Activated CD4-positive, alpha-beta memory T cell treated with anti-CD3 and anti-CD28 coated beads for 36 hours (primary cell): ENCODE measurements at regions of chr9 and their contacts with region 1.

Region 1: DNA sequence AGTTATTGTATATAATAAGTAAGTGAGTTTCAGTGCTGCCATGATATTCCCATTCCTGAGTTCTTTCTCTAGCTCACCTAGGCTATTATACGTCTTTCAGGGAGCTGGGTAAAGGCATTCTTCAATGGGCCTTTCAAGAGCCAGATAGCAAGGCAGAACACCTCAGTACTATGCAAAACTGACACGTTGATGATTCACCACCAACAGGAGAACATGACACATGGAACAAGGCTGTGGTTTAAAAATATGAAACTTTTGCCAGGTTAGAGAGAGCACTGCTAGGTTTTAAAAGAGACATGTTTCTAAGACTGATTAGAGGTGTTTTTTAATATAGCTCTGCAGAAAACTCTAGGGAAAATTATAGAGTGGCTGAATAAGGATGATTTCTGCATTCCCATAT is 95.9 kb downstream of the UGCG start:
- DNase-seq: peak; percentile 45
- H3K4me3 Mint-ChIP-seq: no peak overlapping the region
- H3K27ac Mint-ChIP-seq: peak overlapping the region; percentile 18
- H3K4me1 Mint-ChIP-seq: peaks cover 34% of the 10 kb centered on the region
- H3K27me3 Mint-ChIP-seq: peaks cover 2% of the 10 kb centered on the region

Region 2: DNA sequence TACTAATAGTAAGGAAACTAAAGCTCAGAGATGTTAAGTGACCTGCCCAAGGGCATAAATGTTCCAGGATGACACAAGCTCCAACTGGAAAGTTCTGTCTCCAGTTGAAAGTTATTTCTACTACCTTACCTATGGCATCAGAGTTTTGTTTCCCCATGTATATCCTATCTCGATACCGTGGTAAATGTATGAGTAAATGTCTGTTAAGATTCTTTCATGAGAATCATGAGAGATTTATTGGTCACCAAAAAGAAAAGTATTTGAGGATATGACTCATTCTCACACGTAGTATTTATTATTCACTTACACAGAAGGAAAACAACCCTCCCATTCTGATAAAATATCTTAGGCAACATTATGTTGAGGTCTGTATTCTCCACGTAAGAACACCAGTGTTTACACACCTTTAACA is 186.7 kb before region 1 on chr9:
- CTCF ChIA-PET with region 1: interaction called, 3 read pairs
- POLR2A ChIA-PET with region 1: no interaction called
- intact Hi-C with region 1: loop called (anchors 1 kb)
- DNase-seq: no peak
- H3K4me3 Mint-ChIP-seq: no peak overlapping the region
- H3K27ac Mint-ChIP-seq: no peak overlapping the region
- H3K4me1 Mint-ChIP-seq: peaks cover 30% of the 10 kb centered on the region
- H3K27me3 Mint-ChIP-seq: no peaks in the 10 kb centered on the region

Region 3: GRCh38 chr9:111937781-111938426 is 54.6 kb before region 1 on chr9:
- CTCF ChIA-PET with region 1: no interaction called
- POLR2A ChIA-PET with region 1: interaction called, 6 read pairs
- intact Hi-C with region 1: loop called (anchors 1 kb)
- DNase-seq: peak; percentile 88
- H3K4me3 Mint-ChIP-seq: peak overlapping the region; percentile 53
- H3K27ac Mint-ChIP-seq: peak overlapping the region; percentile 83
- H3K4me1 Mint-ChIP-seq: peaks cover 23% of the 10 kb centered on the region
- H3K27me3 Mint-ChIP-seq: no peaks in the 10 kb centered on the region

Region 4: DNA sequence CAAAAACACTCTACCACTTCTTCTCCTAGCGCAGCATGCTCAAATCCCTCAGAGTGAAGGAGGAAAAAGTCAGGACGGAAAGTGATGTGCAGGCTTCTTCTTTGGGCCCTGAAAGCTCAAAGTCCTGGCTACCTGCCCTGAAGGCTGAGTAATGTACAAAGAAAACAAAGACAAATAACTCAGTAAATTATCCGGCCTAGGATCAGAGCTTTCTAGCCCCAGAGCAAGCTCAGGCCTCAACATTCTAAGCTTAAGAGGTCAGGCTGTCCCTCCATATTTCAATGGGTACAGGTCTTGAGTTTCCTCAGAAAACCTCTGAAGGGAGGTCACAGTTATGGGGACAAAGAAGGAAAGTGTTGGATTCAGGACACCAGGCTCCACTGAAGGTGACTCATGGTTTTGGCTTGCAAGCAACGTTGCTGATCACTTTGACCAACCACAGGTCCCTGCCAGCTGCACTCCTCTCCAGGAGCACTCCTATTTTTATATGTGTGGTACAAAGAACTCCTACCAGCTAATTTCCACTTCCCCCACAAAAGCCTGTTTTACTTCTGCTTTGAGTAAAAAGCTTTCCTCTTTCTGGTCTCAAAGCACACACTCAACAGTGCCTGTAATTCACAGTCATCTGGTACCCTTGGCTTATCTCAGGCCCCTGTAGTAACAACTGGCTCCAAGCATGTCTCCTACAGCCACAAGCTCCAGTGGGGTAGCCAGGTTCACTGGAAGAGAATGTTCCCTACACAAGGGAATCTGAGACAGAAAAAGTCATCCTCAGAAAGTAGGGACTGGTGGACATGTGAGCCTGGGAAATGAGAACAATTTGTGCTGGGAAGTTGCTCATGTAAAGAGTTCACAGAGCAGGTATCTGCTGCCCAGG is 19.7 kb after region 1 on chr9:
- CTCF ChIA-PET with region 1: interaction called, 10 read pairs
- POLR2A ChIA-PET with region 1: interaction called, 10 read pairs
- intact Hi-C with region 1: loop called (anchors 1 kb)
- DNase-seq: peak; percentile 49
- H3K4me3 Mint-ChIP-seq: no peak overlapping the region
- H3K27ac Mint-ChIP-seq: no peak overlapping the region
- H3K4me1 Mint-ChIP-seq: peaks cover 31% of the 10 kb centered on the region
- H3K27me3 Mint-ChIP-seq: peaks cover 25% of the 10 kb centered on the region

Region 5: DNA sequence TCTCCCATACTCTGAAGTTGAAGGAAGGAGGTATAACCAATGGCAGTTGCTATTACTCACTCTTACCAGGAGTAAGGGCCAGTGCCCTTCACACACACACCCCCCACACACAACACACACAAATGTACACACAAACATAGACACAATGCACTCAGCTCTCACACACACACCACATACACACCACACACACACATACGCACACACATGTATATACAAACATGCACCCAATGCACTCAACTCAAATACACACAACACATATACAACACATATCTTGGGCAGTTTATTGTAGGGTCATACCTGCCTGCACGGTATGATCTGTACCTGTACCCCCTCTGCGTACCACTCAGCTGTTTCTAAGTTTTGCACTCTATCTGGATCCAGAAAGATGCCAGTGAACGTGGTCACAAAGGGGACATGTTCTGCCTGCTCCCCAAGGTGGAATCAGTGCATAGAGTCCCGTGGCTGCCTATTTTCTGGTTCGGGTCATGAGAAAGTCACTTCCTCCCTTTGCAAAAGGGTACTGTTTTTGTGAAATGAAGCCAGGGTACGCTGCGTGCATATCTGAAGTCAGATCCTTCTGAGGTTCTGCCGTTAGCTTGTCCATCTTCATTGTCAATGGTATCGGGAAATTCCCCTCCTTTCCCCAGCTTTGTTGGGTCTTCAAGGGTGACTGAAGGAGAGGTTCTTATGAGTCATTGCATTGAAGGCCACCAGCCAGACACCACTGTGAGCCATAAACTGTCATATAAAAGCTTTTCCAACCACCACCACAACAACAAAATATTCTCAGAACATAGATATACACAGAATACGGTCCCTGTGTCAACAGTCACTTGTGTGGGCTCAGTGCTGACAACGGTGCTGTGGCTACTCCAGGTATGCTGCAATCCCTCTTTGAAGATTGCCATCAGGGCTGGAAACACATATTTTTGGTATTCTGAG is 36.0 kb after region 1 on chr9:
- CTCF ChIA-PET with region 1: interaction called, 3 read pairs
- POLR2A ChIA-PET with region 1: interaction called, 3 read pairs
- intact Hi-C with region 1: loop called (anchors 1 kb)
- DNase-seq: peak; percentile 59
- H3K4me3 Mint-ChIP-seq: no peak overlapping the region
- H3K27ac Mint-ChIP-seq: no peak overlapping the region
- H3K4me1 Mint-ChIP-seq: peaks cover 43% of the 10 kb centered on the region
- H3K27me3 Mint-ChIP-seq: peaks cover 6% of the 10 kb centered on the region